G401 (cell line): ENCODE measurements at regions of chr5 and their contacts with region 1.

Region 1: GRCh38 chr5:135729321-135729786 is 105.1 kb upstream of the SLC25A48 start:
- DNase-seq: no peak

Region 2: DNA sequence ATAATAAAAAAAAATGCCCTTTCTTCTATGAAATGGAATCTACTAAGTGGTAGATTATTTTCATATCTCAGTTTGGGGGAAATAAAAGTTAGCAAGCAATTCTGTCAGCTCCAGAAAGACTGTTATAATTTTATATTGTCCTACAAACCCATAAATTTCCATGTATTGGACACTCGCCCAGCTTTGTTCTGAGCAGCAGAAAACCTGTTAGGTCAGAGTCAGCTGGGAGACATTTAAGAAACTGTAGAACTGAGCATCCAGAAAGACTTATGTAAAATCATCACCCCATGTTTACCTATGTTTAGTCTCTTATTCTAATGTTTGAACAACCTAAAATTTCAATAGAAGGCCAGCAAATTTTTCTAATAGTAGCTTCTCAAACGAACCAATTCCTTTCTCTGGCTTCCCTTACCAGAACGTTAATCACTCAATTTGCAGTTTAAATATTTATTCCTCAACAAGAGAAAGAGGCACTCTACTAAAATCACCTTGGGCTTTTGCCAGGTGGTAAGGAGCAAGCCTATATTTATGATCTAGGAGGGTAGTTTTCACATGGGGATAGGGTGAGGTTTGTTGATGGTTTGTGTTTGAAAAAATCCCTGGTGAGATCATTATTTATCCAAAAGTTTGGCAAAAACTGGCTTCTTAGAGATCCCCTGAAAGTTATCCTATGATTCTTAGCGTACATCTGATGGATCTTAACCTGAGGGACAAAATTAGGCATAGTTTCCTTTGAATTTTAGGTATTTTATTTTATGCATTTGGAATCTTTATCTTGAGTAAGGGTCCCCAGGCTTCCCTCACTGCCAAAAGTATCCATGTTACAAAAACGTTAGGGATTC is 364.7 kb before region 1 on chr5:
- in situ Hi-C with region 1: no loop called
- DNase-seq: no peak

Region 3: DNA sequence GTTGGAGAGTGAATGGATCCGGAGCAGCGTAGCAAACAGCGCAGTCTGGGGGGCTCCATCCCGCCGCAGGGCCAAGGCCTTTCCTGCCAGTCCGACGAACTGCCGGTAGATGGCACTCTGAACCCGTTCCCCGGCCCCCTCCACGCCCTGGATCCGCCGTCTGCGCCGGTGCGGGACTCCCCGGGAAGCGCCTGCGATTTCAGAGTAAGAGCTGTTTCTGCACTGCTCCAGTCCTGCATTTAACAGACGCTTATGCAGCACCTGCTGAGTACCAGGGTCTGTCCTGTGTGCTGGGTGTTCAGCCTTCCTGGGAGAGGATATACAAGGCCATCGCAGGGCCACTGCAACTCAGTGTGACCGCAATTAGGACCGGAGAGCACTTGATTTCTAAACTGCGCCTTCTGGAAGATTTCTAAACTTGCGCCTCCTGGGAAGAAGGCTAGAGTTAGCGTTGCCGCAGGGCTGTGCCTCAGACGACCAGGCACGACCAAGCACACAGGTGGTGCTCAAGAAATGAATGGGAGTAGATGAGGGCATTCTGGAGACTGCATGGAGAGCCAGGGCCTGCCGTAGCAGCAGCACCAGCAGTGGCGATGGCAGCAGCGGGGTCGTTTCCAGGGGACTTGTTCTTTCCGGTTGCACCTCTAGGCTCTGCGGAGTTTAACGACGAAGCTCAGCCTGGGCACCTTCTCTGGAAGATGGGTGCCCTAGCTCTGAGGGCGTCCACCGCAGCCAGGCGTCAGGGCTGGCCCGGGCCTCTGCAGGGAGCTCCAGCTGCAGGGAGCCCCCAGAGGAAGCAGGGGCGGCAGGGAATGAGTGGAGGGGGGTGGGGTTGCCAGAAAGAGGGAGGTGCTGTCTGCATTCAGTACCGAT is 262.9 kb before region 1 on chr5:
- in situ Hi-C with region 1: loop called (anchors 25 kb)
- DNase-seq: peak; percentile 80

Region 4: DNA sequence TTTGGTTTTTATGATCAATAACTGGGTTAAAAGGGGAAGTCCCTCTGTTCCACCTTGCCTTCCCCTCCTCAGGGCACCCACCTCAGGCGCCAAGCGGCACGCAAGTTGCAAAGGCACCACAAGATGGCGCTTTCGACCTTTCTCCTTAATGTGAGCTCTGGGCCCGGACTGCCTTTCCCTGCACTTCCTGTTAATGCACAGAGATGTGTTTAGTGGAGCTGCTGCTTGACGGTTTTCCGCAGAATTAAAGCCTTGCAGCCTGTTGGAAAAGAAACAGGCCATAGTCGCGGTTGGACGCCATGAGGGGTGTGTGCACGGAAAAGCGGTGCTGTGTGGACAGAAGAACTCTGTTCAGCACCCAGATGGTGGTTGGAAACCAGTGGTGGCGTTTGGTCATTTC is 168.5 kb before region 1 on chr5:
- in situ Hi-C with region 1: loop called (anchors 25 kb)
- DNase-seq: peak; percentile 82

Region 5: GRCh38 chr5:135688385-135688784 is 41.0 kb before region 1 on chr5:
- in situ Hi-C with region 1: no loop called
- DNase-seq: no peak

Region 6: GRCh38 chr5:135880278-135880677 is 150.9 kb after region 1 on chr5:
- in situ Hi-C with region 1: no loop called
- DNase-seq: no peak